ENCODE measurements at regions of chr22 and their contacts with region 1.

Region 1: GRCh38 chr22:42079319-42080251 is at the start of gene SMDT1:
- DNase-seq: peak; percentile 96 to 100 (median 98)
- ATAC-seq: peak; percentile 92 to 93
- H3K4me3 Mint-ChIP-seq: peak within 1 kb of the TSS; percentile 87 to 98 (median 95)
- H3K27ac Mint-ChIP-seq: peak within 1 kb of the TSS; percentile 91 to 100 (median 99)
- H3K4me1 Mint-ChIP-seq: peaks cover 19 to 55% (median 44%) of the 10 kb centered on the region in 4 donors
- H3K27me3 Mint-ChIP-seq: no peaks in the 10 kb centered on the region
- polyA plus RNA-seq, gene SMDT1: 152 to 294 (median 179) TPM

Region 2: DNA sequence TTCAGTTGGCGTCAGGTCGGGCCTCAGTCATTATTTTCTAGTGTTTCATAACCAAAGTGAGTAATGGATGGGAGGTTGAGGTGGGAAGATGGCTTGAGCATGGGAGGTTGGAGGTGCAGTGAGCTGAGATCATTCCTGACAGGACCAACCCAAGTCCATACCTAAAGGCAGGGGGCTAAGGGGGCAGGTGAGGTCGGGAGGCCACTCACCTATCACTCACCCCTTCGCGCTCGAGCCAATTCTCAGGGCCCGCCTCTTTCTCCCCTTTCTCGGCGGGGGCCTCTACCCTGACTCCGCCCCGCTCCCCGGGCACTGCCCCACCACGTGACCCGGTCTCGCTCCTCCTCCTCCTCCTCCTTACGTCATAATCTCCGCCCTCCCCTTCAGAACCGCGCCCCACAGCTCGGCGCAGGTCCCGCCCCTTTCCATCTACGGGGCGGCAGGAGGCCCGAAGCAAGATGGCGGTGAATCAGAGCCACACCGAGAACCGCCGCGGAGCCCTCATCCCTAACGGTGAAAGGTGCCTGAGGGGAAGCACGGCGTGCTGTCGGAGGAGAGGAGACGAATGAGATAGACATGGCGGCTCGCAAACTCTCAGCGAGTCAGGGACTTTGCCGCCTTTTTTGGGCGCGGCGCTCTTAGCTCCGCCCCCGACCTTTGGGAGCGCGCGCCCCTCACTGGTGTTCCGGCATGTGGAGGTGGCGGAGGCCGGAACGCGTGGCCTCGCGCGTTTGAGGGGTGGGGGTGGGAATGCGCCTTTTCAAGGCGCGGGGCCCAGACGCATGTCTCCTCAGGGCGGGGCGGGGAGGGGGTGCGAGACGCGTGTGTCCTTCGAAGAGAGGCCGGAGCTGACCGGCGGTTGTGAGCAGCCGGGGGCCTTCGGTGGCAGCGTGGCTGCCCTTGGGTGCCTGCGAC is 81.0 kb before region 1 on chr22 and contains the start of gene WBP2NL:
- POLR2A ChIA-PET with region 1: interaction called, 14 read pairs
- DNase-seq: peak; percentile 76 to 94 (median 88)
- ATAC-seq: peak; percentile 91 to 95
- H3K4me3 Mint-ChIP-seq: peak within 1 kb of the TSS; percentile 92 to 99 (median 96)
- H3K27ac Mint-ChIP-seq: peak within 1 kb of the TSS; percentile 91 to 98 (median 96)
- H3K4me1 Mint-ChIP-seq: peaks cover 11 to 25% (median 16%) of the 10 kb centered on the region in 4 donors
- H3K27me3 Mint-ChIP-seq: peaks cover 0 to 5% (median 3%) of the 10 kb centered on the region in 5 donors
- polyA plus RNA-seq, gene WBP2NL: 0.25 to 1.4 (median 0.57) TPM

Region 3: DNA sequence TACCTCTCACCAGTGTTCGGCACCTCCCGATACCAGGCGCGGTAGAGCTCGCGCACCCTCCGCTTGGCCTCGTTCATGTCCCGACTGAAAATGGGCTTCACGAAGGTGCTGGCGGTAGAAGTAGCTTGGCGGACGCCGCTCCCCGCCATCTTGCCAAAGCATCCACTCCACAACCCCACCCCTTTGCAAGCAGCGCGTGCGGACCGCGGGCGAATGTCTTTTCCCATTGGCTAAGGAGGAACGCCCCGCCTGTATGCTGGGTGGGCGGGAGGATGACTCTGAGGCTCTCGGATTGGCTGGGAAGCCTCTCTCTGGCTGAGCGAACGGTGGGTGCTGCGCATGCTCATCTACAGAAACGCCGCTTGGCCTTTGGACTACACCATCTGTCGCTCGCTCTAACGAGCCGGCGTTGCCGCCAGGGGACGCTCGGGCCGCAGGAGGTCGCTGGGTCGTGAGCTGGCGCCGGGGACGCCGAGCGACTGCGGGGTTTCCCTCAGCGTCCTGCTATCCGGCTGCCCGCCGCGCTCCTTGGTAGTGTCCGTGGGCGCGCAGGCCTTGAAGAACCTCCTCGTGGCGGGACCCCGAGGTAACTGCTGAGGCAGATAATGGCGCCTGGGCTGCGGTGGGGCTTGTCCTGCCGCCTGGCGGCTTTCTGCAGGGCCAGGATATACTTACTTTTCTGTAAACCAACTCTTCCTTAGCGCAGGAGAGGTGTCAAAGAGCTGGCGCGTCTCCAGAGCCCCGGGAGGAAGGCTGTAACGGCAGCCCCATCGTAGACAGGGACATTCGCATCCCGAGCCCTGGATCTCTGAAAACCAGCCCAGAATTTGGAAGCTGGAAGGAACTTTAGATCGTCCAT is 11.2 kb after region 1 on chr22 and contains the start of gene NDUFA6:
- POLR2A ChIA-PET with region 1: interaction called, 163 read pairs
- DNase-seq: peak; percentile 92 to 99 (median 98)
- ATAC-seq: peak; percentile 86 to 92
- H3K4me3 Mint-ChIP-seq: peak within 1 kb of the TSS; percentile 94 to 99 (median 98)
- H3K27ac Mint-ChIP-seq: peak within 1 kb of the TSS; percentile 95 to 100 (median 99)
- H3K4me1 Mint-ChIP-seq: peaks cover 16 to 44% (median 28%) of the 10 kb centered on the region in 4 donors
- H3K27me3 Mint-ChIP-seq: no peaks in the 10 kb centered on the region
- polyA plus RNA-seq, gene NDUFA6: 106 to 137 (median 115) TPM

Region 4: GRCh38 chr22:42444077-42444904 is 364.7 kb after region 1 on chr22:
- POLR2A ChIA-PET with region 1: interaction called, 16 read pairs
- DNase-seq: peak; percentile 55 to 87 (median 81)
- ATAC-seq: peak; percentile 88 to 91
- H3K4me3 Mint-ChIP-seq: peak overlapping the region; percentile 74 to 89 (median 82)
- H3K27ac Mint-ChIP-seq: peak overlapping the region; percentile 84 to 95 (median 92)
- H3K4me1 Mint-ChIP-seq: peaks cover 10 to 29% (median 22%) of the 10 kb centered on the region in 4 donors
- H3K27me3 Mint-ChIP-seq: no peaks in the 10 kb centered on the region

Measured in naive thymus-derived CD8-positive, alpha-beta T cell (primary cell).